ENCODE measurements at regions of chr7 and their contacts with region 1.

Region 1: DNA sequence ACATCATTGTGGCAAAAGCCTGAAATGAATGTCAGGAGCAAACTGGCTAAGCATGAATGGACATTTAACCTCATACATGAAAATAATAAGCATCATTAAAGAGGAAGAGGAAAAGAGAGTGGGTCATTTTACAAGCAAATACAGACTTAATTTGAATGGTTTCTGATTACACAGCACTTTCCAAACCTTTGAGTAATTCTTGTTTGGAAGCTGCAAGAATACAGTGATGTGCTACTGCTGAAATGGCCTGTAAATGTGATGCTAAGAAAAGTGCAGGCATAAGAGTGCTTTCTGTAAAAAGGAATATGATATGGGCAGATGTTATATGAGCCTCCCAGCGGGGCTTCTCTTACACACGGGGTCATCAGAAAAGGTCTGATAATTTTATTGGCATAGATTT is 30.2 kb downstream of the TAS2R16 start:
- DNase-seq: no peak
- H3K4me3 ChIP-seq: no peak overlapping the region
- H3K27ac ChIP-seq: peak overlapping the region; percentile 74
- H3K4me1 ChIP-seq: peaks cover 53% of the 10 kb centered on the region
- H3K27me3 ChIP-seq: no peaks in the 10 kb centered on the region
- CTCF ChIP-seq: no peak

Region 2: GRCh38 chr7:122803323-122803722 is 162.0 kb before region 1 on chr7:
- CTCF ChIA-PET with region 1: no interaction called
- POLR2A ChIA-PET with region 1: no interaction called
- intact Hi-C with region 1: loop called (anchors 5 kb)
- DNase-seq: peak; percentile 86
- H3K4me3 ChIP-seq: no peak overlapping the region
- H3K27ac ChIP-seq: peak overlapping the region; percentile 72
- H3K4me1 ChIP-seq: peaks cover 54% of the 10 kb centered on the region
- H3K27me3 ChIP-seq: no peaks in the 10 kb centered on the region
- CTCF ChIP-seq: peak; percentile 70

Region 3: DNA sequence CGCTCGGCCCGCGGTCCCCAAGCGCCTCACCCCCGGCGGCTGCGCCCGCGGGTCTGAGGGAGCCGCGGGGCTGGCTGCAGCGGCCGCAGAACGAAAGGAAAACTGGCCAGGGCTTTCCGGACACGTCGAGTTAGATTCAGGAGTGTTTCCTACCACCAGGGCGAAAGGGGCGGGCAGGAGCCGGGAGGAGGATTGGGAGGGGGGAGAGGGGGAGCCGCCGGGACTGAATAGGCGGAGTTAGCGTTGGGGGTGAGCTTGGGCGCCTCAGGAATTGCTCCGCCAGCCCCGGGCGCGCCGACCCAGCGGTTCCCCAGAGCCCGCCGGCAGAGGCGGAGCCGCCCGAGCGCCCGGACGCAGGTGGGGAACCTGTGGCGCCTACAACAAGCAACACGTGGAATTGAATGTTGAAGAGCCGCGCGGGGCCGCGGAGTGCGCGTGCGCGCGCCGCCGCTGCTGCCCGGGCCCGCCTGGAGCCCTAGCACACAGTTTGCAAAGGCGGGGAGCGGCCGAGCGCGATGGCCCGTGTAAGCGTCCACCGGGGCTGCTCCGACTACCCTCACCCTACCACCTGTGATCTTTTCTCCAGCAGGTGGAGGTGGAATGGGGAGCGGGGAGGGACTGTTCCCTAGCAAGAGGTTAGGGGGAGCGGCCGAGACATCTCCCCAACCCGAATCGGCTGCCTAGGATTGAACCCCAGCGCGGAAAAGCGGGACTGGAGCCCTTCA is 78.8 kb before region 1 on chr7 and contains the start of gene CADPS2:
- CTCF ChIA-PET with region 1: no interaction called
- POLR2A ChIA-PET with region 1: no interaction called
- intact Hi-C with region 1: loop called (anchors 5 kb)
- DNase-seq: peak; percentile 96
- H3K4me3 ChIP-seq: peak within 1 kb of the TSS; percentile 91
- H3K27ac ChIP-seq: peak within 1 kb of the TSS; percentile 93
- H3K4me1 ChIP-seq: peaks cover 22% of the 10 kb centered on the region
- H3K27me3 ChIP-seq: no peaks in the 10 kb centered on the region
- CTCF ChIP-seq: no peak; the same call in 1 of the 2 replicates
- total RNA-seq, gene CADPS2: 74.4 and 81.3 TPM in 2 replicates

Region 4: DNA sequence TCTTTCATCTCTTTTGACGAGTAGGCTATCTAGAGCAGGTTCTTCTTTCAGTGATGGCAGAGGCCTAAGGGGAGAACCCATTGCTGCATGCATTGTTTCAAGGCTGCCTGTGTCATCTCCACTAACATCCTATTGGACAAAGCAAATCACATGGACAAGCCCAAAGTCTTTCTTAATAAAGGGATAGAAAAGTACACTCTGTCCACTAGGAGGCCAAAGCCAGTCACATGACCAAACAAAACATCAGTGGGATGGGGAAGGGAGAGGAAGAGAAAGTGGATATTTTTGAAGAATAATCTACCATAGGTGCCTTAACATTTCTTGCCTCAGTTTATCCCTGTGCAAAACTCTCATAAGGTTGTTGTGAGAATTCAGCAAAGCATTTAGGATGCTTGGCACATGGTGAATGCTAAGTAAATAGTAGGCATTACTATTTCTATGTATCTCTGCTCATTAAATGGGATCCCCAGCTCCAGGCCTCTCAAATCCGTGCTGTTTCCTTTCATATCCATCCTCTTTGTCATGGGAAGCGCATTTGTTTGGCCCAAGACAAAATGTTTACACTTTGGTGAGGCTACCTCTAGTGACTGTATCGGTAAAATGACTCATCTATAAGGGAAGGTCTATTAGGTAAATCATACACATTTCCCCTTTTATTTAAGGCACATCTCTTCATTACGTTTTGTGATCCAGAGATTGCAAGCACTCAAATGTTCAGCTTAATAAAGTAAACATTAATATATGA is 62.4 kb before region 1 on chr7:
- CTCF ChIA-PET with region 1: interaction called, 3 read pairs
- POLR2A ChIA-PET with region 1: no interaction called
- intact Hi-C with region 1: loop called (anchors 2 kb)
- DNase-seq: peak; percentile 54
- H3K4me3 ChIP-seq: no peak overlapping the region
- H3K27ac ChIP-seq: no peak overlapping the region
- H3K4me1 ChIP-seq: peaks cover 37% of the 10 kb centered on the region
- H3K27me3 ChIP-seq: no peaks in the 10 kb centered on the region
- CTCF ChIP-seq: peak; percentile 48

Region 5: DNA sequence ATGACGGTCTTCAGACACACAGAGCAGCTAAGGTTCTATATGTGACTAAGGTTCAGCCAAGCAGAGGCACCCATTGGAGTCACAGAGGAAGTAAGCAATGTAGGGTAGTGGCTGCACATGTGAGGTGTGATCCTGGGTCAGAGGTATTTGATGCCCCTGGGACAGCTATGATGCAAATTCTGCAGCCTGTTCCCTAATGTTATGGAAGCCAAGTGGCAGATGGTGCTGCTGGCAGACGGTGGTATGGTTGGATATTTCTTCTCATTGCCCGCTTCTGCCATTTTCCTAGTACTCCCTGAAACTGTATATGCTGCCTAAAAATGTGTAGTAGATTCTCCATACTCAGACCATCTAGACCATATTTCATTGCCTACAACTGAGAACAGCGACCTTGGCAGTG is 23.0 kb after region 1 on chr7:
- CTCF ChIA-PET with region 1: no interaction called
- POLR2A ChIA-PET with region 1: interaction called, 10 read pairs
- intact Hi-C with region 1: no loop called
- DNase-seq: no peak
- H3K4me3 ChIP-seq: no peak overlapping the region
- H3K27ac ChIP-seq: peak overlapping the region; percentile 4
- H3K4me1 ChIP-seq: peaks cover 15% of the 10 kb centered on the region
- H3K27me3 ChIP-seq: no peaks in the 10 kb centered on the region
- CTCF ChIP-seq: no peak

Region 6: GRCh38 chr7:123120286-123120685 is 155.0 kb after region 1 on chr7:
- CTCF ChIA-PET with region 1: no interaction called
- POLR2A ChIA-PET with region 1: no interaction called
- intact Hi-C with region 1: no loop called
- DNase-seq: peak; percentile 85
- H3K4me3 ChIP-seq: no peak overlapping the region
- H3K27ac ChIP-seq: peak overlapping the region; percentile 39
- H3K4me1 ChIP-seq: peaks cover 23% of the 10 kb centered on the region
- H3K27me3 ChIP-seq: no peaks in the 10 kb centered on the region
- CTCF ChIP-seq: no peak